ENCODE measurements at regions of chr11 and their contacts with region 1.

Region 1: GRCh38 chr11:131511794-131512193 is 141.4 kb downstream of the NTM start:
- DNase-seq: peak; percentile 48
- H3K4me3 ChIP-seq: no peak overlapping the region
- H3K27ac ChIP-seq: no peak overlapping the region
- H3K4me1 ChIP-seq: no peaks in the 10 kb centered on the region
- CTCF ChIP-seq: peak; percentile 80

Region 2: DNA sequence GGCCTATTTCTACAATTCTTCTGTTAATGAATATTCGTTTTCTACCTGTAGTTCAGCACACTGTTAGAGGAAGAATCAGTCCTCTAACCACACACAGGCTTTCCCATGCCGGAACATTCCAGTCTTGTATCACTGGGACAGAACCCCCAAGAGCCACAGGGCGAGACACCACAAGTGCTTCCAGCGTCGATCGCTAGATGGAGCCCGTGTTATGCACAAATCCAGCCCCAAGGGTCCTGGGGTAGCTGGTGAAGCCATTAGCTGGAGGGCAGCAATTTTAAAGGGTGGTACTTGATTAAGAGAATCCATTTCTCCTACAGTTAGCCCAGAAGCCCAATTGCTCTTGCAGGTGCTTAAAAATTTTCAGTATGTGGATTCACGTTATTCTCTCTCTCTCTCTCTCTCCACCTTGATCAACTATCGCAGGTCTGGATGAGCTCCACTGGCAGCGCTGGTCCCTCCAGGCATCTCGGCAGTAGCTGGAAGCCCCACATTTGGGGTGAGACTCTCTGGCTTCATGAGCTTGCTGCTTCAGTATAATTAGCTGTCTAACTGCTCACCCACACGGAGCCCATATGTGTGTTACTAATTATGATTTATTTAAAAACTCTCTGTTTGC is 447.3 kb before region 1 on chr11:
- CTCF ChIA-PET with region 1: interaction called, 4 read pairs
- POLR2A ChIA-PET with region 1: no interaction called
- intact Hi-C with region 1: loop called (anchors 1 kb)
- DNase-seq: peak; percentile 68
- H3K4me3 ChIP-seq: no peak overlapping the region
- H3K27ac ChIP-seq: no peak overlapping the region
- H3K4me1 ChIP-seq: no peaks in the 10 kb centered on the region
- CTCF ChIP-seq: peak; percentile 94

Region 3: DNA sequence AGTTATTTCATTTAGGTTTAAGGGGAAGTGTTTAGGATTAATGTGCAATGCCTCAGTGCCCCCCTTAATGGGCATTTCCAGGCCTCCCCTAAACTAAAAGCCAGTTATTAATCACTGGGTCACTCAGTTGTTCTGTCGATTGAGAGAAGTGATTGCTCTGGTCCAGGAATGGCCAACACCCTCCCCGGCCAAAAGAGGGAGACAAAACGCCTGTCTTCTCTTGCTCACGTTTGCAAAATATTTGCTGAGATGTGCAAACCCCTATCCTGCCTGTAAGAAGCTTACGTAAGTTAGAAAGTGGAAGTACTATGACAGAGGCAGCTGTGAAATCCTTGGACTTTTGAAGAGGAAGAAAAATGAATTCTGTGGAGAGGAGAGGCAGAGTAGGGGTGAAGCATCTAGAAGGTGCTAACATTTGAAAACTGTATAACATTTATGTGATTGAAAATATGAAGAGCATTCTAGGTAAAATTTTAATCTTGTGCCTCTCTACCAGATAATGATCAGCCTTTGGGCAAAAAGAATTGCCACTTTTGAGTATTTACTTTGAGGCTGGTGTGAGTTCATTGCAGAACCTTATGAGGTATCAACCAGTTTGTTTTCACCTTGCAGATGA is 103.7 kb before region 1 on chr11:
- CTCF ChIA-PET with region 1: no interaction called
- POLR2A ChIA-PET with region 1: no interaction called
- intact Hi-C with region 1: loop called (anchors 5 kb)
- DNase-seq: peak; percentile 17
- H3K4me3 ChIP-seq: no peak overlapping the region
- H3K27ac ChIP-seq: no peak overlapping the region
- H3K4me1 ChIP-seq: no peaks in the 10 kb centered on the region
- CTCF ChIP-seq: peak; percentile 77

Region 4: DNA sequence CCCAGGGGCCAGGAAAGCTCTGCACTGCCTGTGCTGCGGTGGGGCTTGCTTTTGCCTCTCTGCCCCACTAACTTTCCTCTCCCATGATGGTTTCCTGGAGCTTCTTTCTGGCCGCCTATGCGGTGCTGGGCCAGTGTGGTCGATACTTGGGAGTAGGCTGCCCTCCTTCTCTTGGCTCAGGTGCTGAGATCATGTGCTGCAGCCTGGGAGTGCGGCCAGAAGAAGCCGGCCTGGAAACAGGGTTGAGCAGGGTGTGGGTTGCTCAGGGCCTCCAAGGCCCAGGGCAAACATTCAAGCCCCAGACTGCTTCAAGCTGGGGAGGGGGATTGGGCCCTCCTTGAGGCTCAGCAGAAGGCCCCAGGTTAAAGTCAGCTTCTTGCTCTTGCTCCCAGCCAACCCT is 16.4 kb before region 1 on chr11:
- CTCF ChIA-PET with region 1: no interaction called
- POLR2A ChIA-PET with region 1: no interaction called
- intact Hi-C with region 1: no loop called
- DNase-seq: no peak
- H3K4me3 ChIP-seq: no peak overlapping the region
- H3K27ac ChIP-seq: no peak overlapping the region
- H3K4me1 ChIP-seq: no peaks in the 10 kb centered on the region
- CTCF ChIP-seq: no peak